Thyroid gland (tissue), 4 donors: ENCODE measurements at regions of chr4 and their contacts with region 1.

Region 1: DNA sequence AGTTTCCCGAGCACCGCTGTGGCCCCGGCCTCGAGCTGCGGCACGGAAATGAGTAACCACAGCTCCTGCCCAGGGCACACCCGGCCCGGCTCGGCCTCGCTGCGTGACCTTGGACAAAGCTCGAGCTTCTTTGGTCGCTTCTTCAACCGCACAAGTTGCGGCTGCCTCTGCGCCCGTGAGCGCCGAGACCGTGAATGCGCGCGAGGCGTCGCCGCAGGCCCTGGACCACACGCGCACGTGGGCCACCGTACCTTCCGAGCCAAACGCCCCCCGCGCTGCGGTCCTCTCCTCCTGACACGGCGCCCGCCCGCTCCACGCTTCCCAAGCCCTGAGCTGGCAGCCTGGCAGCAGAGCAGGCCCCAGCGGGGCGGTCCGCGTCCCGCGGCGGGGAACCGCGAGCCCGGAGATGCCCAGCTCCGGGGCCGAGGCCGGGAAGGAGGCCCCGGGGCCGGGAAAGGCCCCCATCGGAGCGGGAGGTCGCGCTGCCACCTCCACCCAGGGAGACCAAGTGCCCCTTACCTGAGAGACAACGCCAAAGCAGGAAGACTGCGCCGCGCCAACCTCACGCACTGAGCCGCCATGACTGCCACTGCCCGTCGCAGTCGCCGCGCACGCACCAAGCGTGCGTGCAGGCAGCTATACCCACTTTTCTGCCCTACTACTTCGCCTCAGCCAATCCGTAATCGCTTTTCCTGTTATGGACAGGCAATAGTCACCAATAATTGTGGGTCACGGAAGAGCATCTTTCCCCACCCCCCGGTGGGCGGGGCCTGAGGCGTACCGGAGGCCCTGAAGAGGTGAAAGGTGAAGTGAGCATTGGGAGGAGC is at the start of gene GRPEL1:
- DNase-seq: peak; percentile 99 to 100
- H3K4me3 ChIP-seq: peak within 1 kb of the TSS; percentile 71 to 95 (median 88)
- H3K27ac ChIP-seq: peak within 1 kb of the TSS; percentile 48 to 78 (median 67)
- H3K4me1 ChIP-seq: peaks cover 16 to 18% of the 10 kb centered on the region in 2 donors
- H3K27me3 ChIP-seq: no peaks in the 10 kb centered on the region
- CTCF ChIP-seq: peak in 1 of 6 experiments; percentile 13
- POLR2A ChIP-seq: peak; percentile 54 to 95
- total RNA-seq, gene GRPEL1: 13.4 to 21.9 (median 17.5) TPM

Region 2: GRCh38 chr4:6716018-6716911 is 351.4 kb before region 1 on chr4 and contains the start of gene BLOC1S4:
- intact Hi-C with region 1: loop called (anchors 2 kb)
- DNase-seq: peak; percentile 86 to 87
- H3K4me3 ChIP-seq: peak within 1 kb of the TSS; percentile 57 to 68 (median 67)
- H3K27ac ChIP-seq: peak within 1 kb of the TSS; percentile 64 to 90 (median 80)
- H3K4me1 ChIP-seq: peaks cover 7 to 14% of the 10 kb centered on the region in 2 donors
- H3K27me3 ChIP-seq: no peaks in the 10 kb centered on the region
- CTCF ChIP-seq: peak in 3 of 6 experiments; percentile 26 to 33 (median 27)
- POLR2A ChIP-seq: peak; percentile 35 to 88
- total RNA-seq, gene BLOC1S4: 11.7 to 31.3 (median 22.1) TPM

Region 3: GRCh38 chr4:6909073-6909965 is 158.3 kb before region 1 on chr4 and contains the start of gene TBC1D14:
- intact Hi-C with region 1: loop called (anchors 10 kb)
- DNase-seq: peak; percentile 89 to 90
- H3K4me3 ChIP-seq: peak within 1 kb of the TSS; percentile 31 to 80 (median 59)
- H3K27ac ChIP-seq: peak within 1 kb of the TSS; percentile 96 to 98 (median 98)
- H3K4me1 ChIP-seq: peaks cover 9 to 35% of the 10 kb centered on the region in 2 donors
- H3K27me3 ChIP-seq: no peaks in the 10 kb centered on the region
- CTCF ChIP-seq: peak in 2 of 6 experiments; percentile 11 to 35
- POLR2A ChIP-seq: peak in 1 of 2 donors; percentile 61
- total RNA-seq, gene TBC1D14: 39.8 to 47.0 (median 46.0) TPM

Region 4: DNA sequence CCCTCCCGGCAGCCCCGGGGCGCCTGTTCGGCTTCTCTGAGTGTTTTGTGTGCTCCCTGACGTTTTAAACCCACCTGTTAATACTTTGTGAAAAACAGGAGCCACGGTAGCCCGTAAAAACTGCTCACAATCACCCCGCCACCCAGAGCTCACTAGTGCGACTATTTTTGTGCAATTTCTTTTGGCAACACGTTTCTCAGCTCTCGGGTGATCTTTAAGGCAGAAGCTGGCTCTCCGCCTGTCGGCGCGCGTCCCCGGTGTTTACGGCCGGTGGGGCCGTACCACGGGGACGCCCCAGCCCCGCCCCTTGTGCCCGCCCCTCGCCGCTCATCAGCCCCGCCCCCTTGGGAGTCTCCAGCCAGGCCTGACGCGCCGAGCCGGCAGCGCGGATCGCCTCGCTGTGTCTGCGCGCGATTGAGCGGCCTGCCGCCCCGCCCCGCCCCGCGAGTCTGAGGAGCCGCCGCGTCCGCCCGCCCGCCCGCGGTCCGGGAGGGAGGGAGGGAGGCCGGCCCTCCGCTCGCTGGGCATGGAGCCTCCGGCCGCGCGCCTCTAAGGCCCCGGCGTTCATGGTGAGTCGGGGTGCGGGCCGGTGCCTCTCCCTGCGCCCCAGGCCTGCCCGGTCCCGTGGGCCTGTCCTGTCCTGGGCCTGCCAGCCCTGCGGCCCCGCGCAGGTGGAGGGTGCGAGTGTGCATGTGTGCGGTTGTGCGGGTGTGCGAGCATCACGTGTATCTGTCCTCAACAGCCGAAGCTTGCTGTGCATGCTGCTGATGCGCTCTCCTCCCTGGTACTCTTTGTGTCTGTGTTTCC is 80.7 kb before region 1 on chr4:
- intact Hi-C with region 1: loop called (anchors 5 kb)
- DNase-seq: peak; percentile 95
- H3K4me3 ChIP-seq: peak overlapping the region; percentile 57 to 89 (median 85)
- H3K27ac ChIP-seq: peak overlapping the region; percentile 81 to 92 (median 86)
- H3K4me1 ChIP-seq: peaks cover 25 to 43% of the 10 kb centered on the region in 2 donors
- H3K27me3 ChIP-seq: no peaks in the 10 kb centered on the region
- CTCF ChIP-seq: peak in 2 of 6 experiments; percentile 7 to 21
- POLR2A ChIP-seq: peak in 1 of 2 donors; percentile 77

Region 5: DNA sequence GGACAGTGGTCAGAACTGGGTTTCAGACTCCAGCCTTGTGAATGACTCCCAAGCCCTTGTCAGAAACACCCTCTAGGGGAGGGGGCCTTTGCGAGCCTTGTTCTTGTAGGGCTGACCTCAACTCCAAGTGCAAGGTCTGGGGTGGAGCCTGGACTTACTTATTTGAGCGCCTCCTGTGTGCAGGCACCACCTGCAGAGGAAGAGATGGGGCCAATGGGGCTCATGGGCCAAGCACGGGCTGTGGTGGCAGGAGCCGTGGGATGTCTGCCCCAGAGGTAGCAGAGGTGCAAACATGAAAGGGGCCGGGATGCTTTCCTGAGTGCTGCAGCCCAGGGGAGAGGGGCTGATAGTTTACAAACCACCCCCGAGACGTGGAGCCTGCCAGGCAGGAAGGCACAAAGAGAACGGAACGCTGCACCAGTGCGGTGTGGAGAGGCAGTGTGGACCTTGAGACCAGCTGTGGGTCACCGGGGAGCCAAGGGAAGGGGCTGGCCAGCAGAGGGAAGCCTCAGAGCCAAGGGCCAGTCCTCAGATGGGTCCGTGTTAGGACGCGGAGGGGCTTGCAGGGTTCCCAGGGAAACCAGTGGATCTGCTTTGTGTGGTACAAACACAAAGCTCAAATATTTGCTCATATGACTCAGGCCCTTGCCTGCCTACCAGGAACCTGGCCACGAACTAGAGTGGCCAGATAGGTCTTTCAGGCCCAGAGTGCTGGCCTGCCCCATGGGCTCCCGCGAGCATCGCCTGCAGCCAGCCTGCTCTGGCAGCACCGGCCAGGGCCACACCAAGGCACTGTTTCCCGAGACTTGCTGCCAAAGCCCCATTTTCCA is 33.2 kb before region 1 on chr4:
- intact Hi-C with region 1: loop called (anchors 5 kb)
- DNase-seq: no peak
- H3K4me3 ChIP-seq: no peak overlapping the region
- H3K27ac ChIP-seq: no peak overlapping the region
- H3K4me1 ChIP-seq: no peaks in the 10 kb centered on the region
- H3K27me3 ChIP-seq: no peaks in the 10 kb centered on the region
- CTCF ChIP-seq: no peak
- POLR2A ChIP-seq: no peak

Region 6: GRCh38 chr4:7042697-7043464 is 24.8 kb before region 1 on chr4 and contains the start of gene TADA2B:
- intact Hi-C with region 1: loop called (anchors 2 kb)
- DNase-seq: peak; percentile 98
- H3K4me3 ChIP-seq: peak within 1 kb of the TSS; percentile 60 to 96 (median 88)
- H3K27ac ChIP-seq: peak within 1 kb of the TSS; percentile 59 to 78 (median 76)
- H3K4me1 ChIP-seq: peaks cover 32 to 38% of the 10 kb centered on the region in 2 donors
- H3K27me3 ChIP-seq: no peaks in the 10 kb centered on the region
- CTCF ChIP-seq: peak in 3 of 6 experiments; percentile 56 to 83 (median 69)
- POLR2A ChIP-seq: peak in 1 of 2 donors; percentile 45
- total RNA-seq, gene TADA2B: 17.9 to 34.1 (median 26.6) TPM